HCT116 (cell line): ENCODE measurements at regions of chr2 and their contacts with region 1.

Region 1: DNA sequence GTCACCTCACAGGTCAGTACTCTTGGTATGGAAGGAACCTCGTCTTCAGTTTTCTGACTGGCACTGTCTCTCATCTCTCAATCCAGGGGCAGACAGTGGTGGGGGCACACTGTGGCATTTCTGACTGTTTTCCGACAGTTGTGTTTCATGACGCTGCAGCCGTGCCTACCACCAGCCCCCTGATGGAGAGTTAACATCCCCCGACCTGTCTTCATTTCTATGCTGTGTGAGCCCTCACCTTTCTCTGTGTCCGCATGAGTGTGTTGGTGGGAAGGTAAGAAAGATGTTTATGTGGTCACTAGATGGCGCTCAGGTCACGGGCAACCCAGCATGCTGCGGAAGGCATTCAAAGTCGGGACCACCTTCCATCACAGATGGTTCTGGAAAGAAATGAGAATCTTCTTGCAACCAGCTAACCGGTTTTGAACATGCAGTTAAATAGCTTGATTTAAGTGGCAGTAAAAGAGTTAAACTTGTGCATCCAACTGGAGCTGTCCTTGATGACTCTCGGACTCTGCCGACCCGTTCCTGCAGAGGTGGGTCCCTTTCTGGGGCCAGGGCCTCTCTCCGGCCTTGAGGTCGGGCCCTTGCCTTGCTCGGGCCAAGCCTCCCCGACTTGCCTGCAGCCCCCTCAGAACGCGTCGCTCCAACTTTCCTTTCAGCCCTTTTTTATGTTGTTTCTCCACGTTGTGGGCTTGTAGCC is 92.4 kb downstream of the DYSF start:
- DNase-seq: peak; percentile 57
- ATAC-seq: peak; percentile 89
- H3K4me3 ChIP-seq: peak overlapping the region; percentile 37 to 53
- H3K27ac ChIP-seq: peak overlapping the region; percentile 4; the same call in 1 of the 2 replicates
- H3K4me1 ChIP-seq: peaks cover 2 to 15% of the 10 kb centered on the region in 2 experiments; a peak in 3 of 4 replicates
- H3K27me3 ChIP-seq: no peaks in the 10 kb centered on the region
- CTCF ChIP-seq: peak; percentile 72 to 87 (median 84)
- POLR2A ChIP-seq: no peak
- RAD21 ChIP-seq: peak; percentile 92

Region 2: DNA sequence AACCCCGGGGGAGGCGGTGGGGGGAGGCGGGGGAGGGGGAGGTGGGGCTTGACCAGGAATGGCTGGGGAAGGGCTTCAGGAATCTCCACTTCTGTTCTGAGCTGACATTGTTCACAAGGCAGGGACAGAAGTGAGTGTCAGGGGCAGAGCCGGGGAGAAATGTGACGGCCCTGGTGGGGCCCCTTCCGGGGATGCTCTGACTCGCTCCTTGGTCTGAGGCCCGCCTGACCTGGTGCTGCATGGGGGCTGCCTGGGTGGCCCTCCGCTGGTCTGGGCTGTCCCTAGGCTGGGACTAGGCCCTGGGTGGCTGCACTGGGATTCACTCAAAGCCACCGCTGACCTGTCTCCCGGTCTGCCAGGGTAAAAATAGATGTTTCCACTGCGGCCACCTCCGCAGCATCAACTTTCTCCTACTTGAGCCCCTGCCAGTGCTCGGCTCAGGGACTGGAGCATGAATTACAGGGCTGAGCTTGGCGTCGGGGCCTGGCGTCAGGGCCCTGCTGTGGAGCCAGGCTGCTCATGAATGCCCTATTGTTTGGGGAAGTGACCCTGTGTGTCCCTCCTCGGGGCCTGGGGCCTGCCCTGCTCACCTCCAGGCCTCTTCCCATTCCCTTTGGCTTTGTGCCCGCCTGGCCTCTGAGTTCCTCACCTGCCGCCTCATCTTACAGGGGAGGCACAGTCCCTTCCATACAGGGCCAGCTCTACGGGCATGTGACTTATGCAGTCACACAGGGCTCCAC is 155.1 kb after region 1 on chr2:
- CTCF ChIA-PET with region 1: no interaction called
- POLR2A ChIA-PET with region 1: no interaction called
- RAD21 ChIA-PET with region 1: no interaction called
- intact Hi-C with region 1: no loop called
- DNase-seq: no peak
- ATAC-seq: no peak
- H3K4me3 ChIP-seq: no peak overlapping the region
- H3K27ac ChIP-seq: no peak overlapping the region
- H3K4me1 ChIP-seq: no peaks in the 10 kb centered on the region
- H3K27me3 ChIP-seq: no peaks in the 10 kb centered on the region
- CTCF ChIP-seq: no peak
- POLR2A ChIP-seq: no peak
- RAD21 ChIP-seq: no peak

Region 3: DNA sequence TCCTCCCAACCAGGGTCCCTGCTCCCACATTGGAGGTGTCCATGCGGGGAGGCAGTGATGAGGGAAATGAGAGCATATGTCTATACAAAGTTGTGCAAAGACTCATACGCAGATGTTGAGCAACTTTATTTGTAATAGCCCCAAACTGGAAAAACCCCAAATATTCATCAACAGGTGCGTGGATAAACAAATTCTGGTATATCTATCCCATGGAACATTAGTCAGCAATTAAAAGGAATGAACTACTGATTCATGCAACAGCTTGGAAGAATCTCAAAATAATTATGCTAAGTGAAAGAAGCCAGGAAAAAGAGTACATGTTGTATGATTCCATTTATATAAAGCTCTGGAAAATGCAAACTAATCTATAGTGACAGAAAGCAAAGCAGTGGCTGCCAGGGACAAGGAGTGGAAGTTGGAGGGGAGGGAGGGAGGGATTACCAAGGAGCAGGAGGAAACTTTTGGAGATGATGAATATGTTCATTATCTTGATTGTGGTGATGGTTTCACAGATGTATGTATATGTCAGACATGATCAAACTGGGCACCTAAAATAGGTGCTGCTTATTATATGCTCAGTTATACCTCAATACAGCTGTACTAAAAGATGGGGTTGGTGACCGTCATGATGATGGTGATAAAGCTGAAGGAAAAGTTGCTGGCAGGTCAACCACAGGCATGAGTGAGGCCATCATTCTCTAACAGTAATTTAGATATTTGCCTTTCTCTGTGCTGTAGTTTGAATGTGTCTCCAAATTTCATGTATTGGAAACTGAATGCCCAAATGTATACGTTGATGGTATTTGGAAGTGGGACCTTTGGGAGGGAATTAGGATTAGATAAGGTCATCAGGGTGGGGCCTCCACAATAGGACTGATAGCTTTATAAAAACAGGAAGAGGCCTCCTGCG is 331.1 kb after region 1 on chr2:
- CTCF ChIA-PET with region 1: no interaction called
- POLR2A ChIA-PET with region 1: no interaction called
- RAD21 ChIA-PET with region 1: no interaction called
- intact Hi-C with region 1: loop called (anchors 2 kb)
- DNase-seq: no peak
- ATAC-seq: no peak
- H3K4me3 ChIP-seq: no peak overlapping the region
- H3K27ac ChIP-seq: no peak overlapping the region
- H3K4me1 ChIP-seq: peaks cover 23 to 30% of the 10 kb centered on the region in 2 experiments
- H3K27me3 ChIP-seq: no peaks in the 10 kb centered on the region
- CTCF ChIP-seq: no peak
- POLR2A ChIP-seq: no peak
- RAD21 ChIP-seq: no peak

Region 4: GRCh38 chr2:71923887-71924533 is 378.3 kb after region 1 on chr2:
- CTCF ChIA-PET with region 1: no interaction called
- POLR2A ChIA-PET with region 1: no interaction called
- RAD21 ChIA-PET with region 1: no interaction called
- intact Hi-C with region 1: loop called (anchors 1 kb)
- DNase-seq: peak; percentile 72
- ATAC-seq: peak; percentile 93
- H3K4me3 ChIP-seq: no peak overlapping the region
- H3K27ac ChIP-seq: no peak overlapping the region
- H3K4me1 ChIP-seq: peaks cover 0 to 7% of the 10 kb centered on the region in 2 experiments; a peak in 1 of 4 replicates
- H3K27me3 ChIP-seq: no peaks in the 10 kb centered on the region
- CTCF ChIP-seq: peak; percentile 80 to 92 (median 88)
- POLR2A ChIP-seq: no peak
- RAD21 ChIP-seq: peak; percentile 87

Region 5: DNA sequence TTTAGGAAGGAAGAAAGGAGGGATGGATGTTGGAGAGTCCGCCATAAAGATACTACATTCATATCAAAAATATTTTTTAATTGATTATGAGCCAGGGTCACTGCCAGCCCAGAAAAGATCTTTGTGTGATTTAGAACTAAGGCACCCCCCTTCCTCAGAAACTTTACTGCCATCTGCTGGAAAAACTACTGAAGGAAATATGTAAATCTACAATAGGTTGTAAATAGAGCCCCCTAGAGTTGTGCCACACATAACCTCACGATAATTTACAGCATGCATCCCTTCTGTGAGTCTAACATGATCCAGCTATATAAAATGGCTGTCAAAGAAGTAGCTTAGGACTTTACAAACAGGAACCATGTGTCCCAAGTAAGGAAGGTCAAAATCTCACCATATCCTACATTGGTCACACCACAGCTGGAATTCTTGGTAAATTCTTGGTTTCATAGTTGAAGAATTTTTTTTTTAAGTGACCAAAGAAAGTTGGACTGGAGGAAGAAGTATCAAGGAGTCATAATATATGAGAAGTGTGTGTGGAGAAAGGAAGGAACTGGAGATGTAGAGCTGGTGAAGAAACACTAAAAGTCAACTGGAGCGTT is 449.4 kb after region 1 on chr2:
- CTCF ChIA-PET with region 1: no interaction called
- POLR2A ChIA-PET with region 1: no interaction called
- RAD21 ChIA-PET with region 1: no interaction called
- intact Hi-C with region 1: loop called (anchors 5 kb)
- DNase-seq: peak; percentile 27
- ATAC-seq: peak; percentile 88
- H3K4me3 ChIP-seq: no peak overlapping the region
- H3K27ac ChIP-seq: no peak overlapping the region
- H3K4me1 ChIP-seq: no peaks in the 10 kb centered on the region
- H3K27me3 ChIP-seq: no peaks in the 10 kb centered on the region
- CTCF ChIP-seq: peak; percentile 49 to 99 (median 67)
- POLR2A ChIP-seq: no peak
- RAD21 ChIP-seq: peak; percentile 83

Region 6: GRCh38 chr2:72144632-72145288 is 599.0 kb after region 1 on chr2:
- CTCF ChIA-PET with region 1: interaction called, 3 read pairs
- POLR2A ChIA-PET with region 1: no interaction called
- RAD21 ChIA-PET with region 1: no interaction called
- intact Hi-C with region 1: loop called (anchors 2 kb)
- DNase-seq: peak; percentile 58
- ATAC-seq: peak; percentile 77
- H3K4me3 ChIP-seq: peak overlapping the region; percentile 68 to 69
- H3K27ac ChIP-seq: peak overlapping the region; percentile 75
- H3K4me1 ChIP-seq: peaks cover 18 to 35% of the 10 kb centered on the region in 2 experiments; a peak in 3 of 4 replicates
- H3K27me3 ChIP-seq: no peaks in the 10 kb centered on the region
- CTCF ChIP-seq: no peak
- POLR2A ChIP-seq: peak; percentile 32
- RAD21 ChIP-seq: no peak

Region 7: DNA sequence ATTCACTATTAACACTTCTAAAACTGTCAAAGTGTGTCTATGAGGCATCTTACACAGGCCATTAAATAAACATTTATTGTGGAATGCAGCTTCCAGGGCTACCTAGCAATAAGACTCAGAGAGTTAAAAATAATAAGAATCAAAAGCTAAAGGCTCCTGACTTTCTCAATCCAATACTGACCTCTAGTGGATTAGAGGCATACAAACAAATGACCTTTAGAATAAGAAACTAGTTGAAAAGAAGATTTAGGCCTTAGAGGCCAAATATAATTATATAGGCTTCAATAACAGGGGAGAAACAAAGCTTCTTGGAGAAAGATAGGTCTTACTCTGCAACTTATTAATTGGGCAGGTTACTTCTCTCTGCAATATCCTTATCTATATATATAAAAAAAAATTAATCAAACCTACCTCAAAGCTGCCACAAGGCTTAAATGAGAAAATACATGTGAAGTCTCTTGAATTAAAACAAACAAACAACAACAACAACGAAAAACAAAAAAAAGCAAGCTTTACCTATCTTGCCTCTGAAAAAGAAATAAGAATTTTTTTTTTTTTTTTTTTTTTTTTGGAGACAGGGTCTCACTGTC is 1034.0 kb after region 1 on chr2:
- CTCF ChIA-PET with region 1: interaction called, 5 read pairs
- POLR2A ChIA-PET with region 1: no interaction called
- RAD21 ChIA-PET with region 1: no interaction called
- intact Hi-C with region 1: loop called (anchors 2 kb)
- DNase-seq: peak; percentile 26
- ATAC-seq: peak; percentile 50; the same call in 1 of the 2 replicates
- H3K4me3 ChIP-seq: no peak overlapping the region
- H3K27ac ChIP-seq: no peak overlapping the region
- H3K4me1 ChIP-seq: no peaks in the 10 kb centered on the region
- H3K27me3 ChIP-seq: no peaks in the 10 kb centered on the region
- CTCF ChIP-seq: peak; percentile 54 to 76 (median 74); a peak in 5 of 6 replicates
- POLR2A ChIP-seq: no peak
- RAD21 ChIP-seq: peak; percentile 87

Region 8: DNA sequence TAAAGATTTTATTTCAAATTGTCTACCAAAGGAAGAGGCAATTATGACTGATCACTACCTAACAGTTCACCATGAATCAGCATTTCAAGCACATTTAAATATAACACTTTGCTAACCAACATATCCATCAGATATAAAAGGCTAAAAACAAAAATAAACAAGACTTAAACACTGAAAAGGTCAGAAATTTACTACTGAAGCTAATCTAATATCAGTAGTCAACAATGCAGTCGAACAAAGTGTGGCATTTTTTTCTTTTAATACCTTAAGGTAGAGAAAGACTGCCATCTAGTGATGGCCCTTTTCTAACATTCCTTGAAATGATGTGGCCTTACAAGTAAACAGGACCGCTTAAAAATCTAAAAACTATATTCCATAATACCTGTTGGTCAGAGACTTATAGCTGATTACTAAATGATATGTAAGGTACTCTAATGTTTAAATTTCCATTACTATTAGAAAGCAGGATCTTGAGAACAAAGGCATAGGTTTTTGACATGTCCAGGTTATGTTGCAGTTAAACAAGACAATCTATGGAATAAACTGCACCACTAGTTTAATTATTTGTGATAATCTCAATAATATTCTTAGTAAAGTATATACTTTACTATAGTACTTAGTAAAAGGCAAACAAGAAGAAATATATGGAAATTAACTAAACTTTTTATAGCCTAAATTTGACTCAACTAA is 1200.1 kb after region 1 on chr2:
- CTCF ChIA-PET with region 1: no interaction called
- POLR2A ChIA-PET with region 1: no interaction called
- RAD21 ChIA-PET with region 1: no interaction called
- intact Hi-C with region 1: loop called (anchors 2 kb)
- DNase-seq: peak; percentile 48
- ATAC-seq: peak; percentile 50
- H3K4me3 ChIP-seq: no peak overlapping the region
- H3K27ac ChIP-seq: no peak overlapping the region
- H3K4me1 ChIP-seq: peaks cover 0 to 3% of the 10 kb centered on the region in 2 experiments; a peak in 1 of 4 replicates
- H3K27me3 ChIP-seq: no peaks in the 10 kb centered on the region
- CTCF ChIP-seq: peak; percentile 50 to 85 (median 59); a peak in 5 of 6 replicates
- POLR2A ChIP-seq: no peak
- RAD21 ChIP-seq: peak; percentile 79